ENCODE measurements at regions of chr1 and their contacts with region 1.

Region 1: GRCh38 chr1:65209005-65209885 is 61.2 kb downstream of the AK4 start:
- DNase-seq: peak; percentile 37 to 42
- H3K4me3 ChIP-seq: no peak overlapping the region
- H3K27ac ChIP-seq: no peak overlapping the region
- H3K4me1 ChIP-seq: no peaks in the 10 kb centered on the region
- H3K27me3 ChIP-seq: no peaks in the 10 kb centered on the region
- CTCF ChIP-seq: peak; percentile 75

Region 2: GRCh38 chr1:64864018-64864940 is 345.0 kb before region 1 on chr1:
- CTCF ChIA-PET with region 1: no interaction called
- POLR2A ChIA-PET with region 1: no interaction called
- intact Hi-C with region 1: loop called (anchors 2 kb)
- DNase-seq: peak in 1 of 2 experiments; percentile 84
- H3K4me3 ChIP-seq: no peak overlapping the region
- H3K27ac ChIP-seq: peak overlapping the region; percentile 59
- H3K4me1 ChIP-seq: peaks cover 6% of the 10 kb centered on the region; the same call in 1 of the 2 replicates
- H3K27me3 ChIP-seq: no peaks in the 10 kb centered on the region
- CTCF ChIP-seq: no peak

Region 3: DNA sequence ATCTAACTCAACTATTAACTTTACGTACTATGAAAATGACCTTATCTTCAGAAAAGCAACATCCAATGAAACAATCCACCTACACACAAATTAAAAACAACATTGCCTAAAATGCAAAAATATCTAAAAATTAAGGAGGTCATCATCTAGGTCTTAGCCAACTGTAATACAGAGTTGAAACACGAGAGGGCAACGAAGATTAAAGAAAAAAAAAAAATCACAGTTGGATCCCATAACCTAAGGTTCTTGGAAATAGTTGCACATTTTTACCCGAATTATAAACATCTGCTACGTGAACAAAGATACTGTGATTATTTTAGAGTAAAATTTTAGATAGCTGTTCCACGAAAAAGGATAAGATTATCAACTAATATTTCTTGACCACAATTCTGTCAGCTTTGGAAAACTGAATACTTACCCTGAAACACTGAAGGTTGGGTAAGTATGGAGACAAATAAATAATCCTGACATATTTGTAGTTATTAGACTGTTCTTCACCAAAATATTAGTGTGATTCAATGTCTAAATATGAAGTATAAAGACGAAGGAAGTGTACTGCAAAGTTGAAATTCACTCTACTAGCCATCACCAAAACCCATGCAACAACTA is 149.2 kb before region 1 on chr1:
- CTCF ChIA-PET with region 1: interaction called, 4 read pairs
- POLR2A ChIA-PET with region 1: no interaction called
- intact Hi-C with region 1: loop called (anchors 1 kb)
- DNase-seq: peak in 1 of 2 experiments; percentile 48
- H3K4me3 ChIP-seq: no peak overlapping the region
- H3K27ac ChIP-seq: no peak overlapping the region
- H3K4me1 ChIP-seq: no peaks in the 10 kb centered on the region
- H3K27me3 ChIP-seq: no peaks in the 10 kb centered on the region
- CTCF ChIP-seq: peak; percentile 78

Region 4: DNA sequence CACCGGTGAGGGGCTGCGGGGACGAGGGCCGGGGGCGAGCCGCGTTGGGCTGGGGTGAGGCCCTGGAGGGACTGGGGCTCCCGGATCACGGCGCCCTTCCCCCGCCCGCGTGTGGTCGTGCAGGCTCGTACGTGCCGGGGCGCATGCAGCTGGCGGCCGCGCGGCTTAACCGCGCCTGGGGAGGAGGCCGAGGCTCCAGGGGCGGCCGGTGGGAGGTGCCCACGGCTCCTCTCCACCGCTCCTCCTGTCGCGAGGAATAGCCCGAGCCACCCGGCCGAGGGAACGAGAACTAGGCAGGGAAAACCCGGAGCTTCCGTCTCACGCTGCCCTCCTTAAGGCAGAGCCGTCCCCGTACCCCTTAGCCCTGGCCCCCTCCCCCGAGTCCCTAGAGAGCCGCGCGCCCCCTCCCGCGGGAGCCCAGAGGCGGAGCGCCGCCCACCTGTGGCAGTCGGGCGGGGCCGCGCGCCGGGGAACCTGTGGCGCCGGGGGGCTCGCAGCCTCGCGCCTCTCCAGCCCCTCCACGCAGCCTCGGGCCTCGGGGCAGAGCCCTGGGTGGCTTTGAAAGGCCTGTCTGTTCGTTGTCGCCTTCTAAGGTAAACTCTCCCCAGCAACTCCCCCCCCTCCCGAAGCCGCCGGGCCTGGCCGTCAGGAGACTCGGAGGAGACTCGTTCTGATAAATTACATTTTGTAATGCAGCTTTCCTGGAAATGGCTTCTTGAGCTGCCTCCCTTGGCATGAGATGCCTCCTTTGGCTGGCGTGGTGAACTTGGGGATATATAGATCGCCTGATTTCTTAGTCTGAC is 60.5 kb before region 1 on chr1:
- CTCF ChIA-PET with region 1: interaction called, 3 read pairs
- POLR2A ChIA-PET with region 1: no interaction called
- intact Hi-C with region 1: loop called (anchors 5 kb)
- DNase-seq: peak in 1 of 2 experiments; percentile 28
- H3K4me3 ChIP-seq: peak overlapping the region; percentile 97
- H3K27ac ChIP-seq: no peak overlapping the region
- H3K4me1 ChIP-seq: peaks cover 9% of the 10 kb centered on the region
- H3K27me3 ChIP-seq: no peaks in the 10 kb centered on the region
- CTCF ChIP-seq: no peak

Region 5: DNA sequence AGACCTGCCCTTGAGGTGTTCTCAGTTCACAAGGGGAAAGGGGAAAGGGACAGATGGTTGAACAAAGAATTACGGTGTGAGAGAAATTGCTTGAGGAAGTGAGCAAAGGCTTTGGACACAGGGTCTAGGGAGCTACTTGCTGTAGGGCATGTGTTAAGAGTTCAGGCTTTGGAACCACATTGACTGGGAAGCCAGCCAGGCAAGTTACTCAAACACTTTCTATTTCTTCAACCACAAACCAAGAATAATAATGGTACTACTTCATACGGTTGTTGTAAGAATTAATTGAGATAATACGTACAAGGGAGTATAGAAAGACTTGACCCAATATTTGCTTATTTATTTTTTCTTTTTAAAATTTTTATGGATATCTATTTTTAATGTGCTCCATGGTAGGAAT is 34.7 kb before region 1 on chr1:
- CTCF ChIA-PET with region 1: interaction called, 11 read pairs
- POLR2A ChIA-PET with region 1: no interaction called
- intact Hi-C with region 1: no loop called
- DNase-seq: peak; percentile 74 to 98
- H3K4me3 ChIP-seq: no peak overlapping the region
- H3K27ac ChIP-seq: peak overlapping the region; percentile 81
- H3K4me1 ChIP-seq: peaks cover 83% of the 10 kb centered on the region
- H3K27me3 ChIP-seq: no peaks in the 10 kb centered on the region
- CTCF ChIP-seq: no peak

Region 6: DNA sequence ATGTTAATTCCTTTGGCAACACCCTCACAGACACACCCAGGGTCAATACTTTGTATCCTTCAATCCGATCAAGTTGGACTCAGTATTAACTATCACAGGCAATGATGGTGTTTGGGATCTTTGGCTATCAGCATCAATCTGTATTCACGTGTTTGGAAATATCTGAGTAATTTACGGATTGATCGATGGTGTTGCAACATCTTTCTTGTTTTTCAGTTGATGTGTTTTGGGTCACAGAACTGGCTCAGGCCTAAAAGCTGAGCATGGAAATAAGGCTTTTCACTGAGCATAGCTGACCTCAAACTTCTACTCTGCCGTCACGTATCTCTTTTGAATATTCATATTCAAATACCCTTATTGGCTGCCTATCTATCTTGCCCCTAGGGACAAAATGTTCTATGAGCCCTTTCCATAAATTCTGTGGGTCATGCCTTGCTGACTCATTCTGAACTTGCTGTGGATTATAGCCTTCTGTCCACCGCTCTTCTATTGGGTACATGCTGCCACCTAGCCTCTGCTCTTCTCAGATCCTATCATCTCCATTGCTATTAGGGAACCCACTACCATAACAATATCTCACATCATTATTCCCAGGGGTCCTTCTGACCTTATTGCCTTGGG is 739.5 kb after region 1 on chr1:
- CTCF ChIA-PET with region 1: no interaction called
- POLR2A ChIA-PET with region 1: no interaction called
- intact Hi-C with region 1: loop called (anchors 10 kb)
- DNase-seq: no peak
- H3K4me3 ChIP-seq: no peak overlapping the region
- H3K27ac ChIP-seq: no peak overlapping the region
- H3K4me1 ChIP-seq: no peaks in the 10 kb centered on the region
- H3K27me3 ChIP-seq: no peaks in the 10 kb centered on the region
- CTCF ChIP-seq: no peak

Region 7: GRCh38 chr1:66242646-66243547 is 1033.7 kb after region 1 on chr1:
- CTCF ChIA-PET with region 1: no interaction called
- POLR2A ChIA-PET with region 1: no interaction called
- intact Hi-C with region 1: loop called (anchors 10 kb)
- DNase-seq: peak; percentile 74 to 83
- H3K4me3 ChIP-seq: no peak overlapping the region
- H3K27ac ChIP-seq: no peak overlapping the region
- H3K4me1 ChIP-seq: no peaks in the 10 kb centered on the region
- H3K27me3 ChIP-seq: 0 out of 2 replicates have a peak, but pooled peaks cover 4% of the 10 kb centered on the region
- CTCF ChIP-seq: peak; percentile 95